CD14-positive monocyte (primary cell): ENCODE measurements at regions of chr1 and their contacts with region 1.

Region 1: GRCh38 chr1:41751804-41752513 is 166.8 kb downstream of the HIVEP3 start:
- DNase-seq: peak; percentile 94 to 97 (median 95)
- H3K4me3 ChIP-seq: peak overlapping the region in 1 of 3 experiments; percentile 21
- H3K4me3 Mint-ChIP-seq: peak overlapping the region; percentile 40 to 76
- H3K27ac ChIP-seq: peak overlapping the region; percentile 91 to 96
- H3K27ac Mint-ChIP-seq: peak overlapping the region; percentile 96 to 99 (median 98)
- H3K4me1 ChIP-seq: peaks cover 51 to 68% of the 10 kb centered on the region in 2 donors
- H3K4me1 Mint-ChIP-seq: peaks cover 60% of the 10 kb centered on the region
- H3K27me3 ChIP-seq: no peaks in the 10 kb centered on the region
- H3K27me3 Mint-ChIP-seq: peaks cover 0 to 7% (median under 1%) of the 10 kb centered on the region in 3 donors
- CTCF ChIP-seq: no peak

Region 2: GRCh38 chr1:41599912-41600311 is 152.0 kb before region 1 on chr1:
- intact Hi-C with region 1: no loop called
- DNase-seq: no peak
- H3K4me3 ChIP-seq: no peak overlapping the region
- H3K4me3 Mint-ChIP-seq: no peak overlapping the region
- H3K27ac ChIP-seq: no peak overlapping the region
- H3K27ac Mint-ChIP-seq: no peak overlapping the region
- H3K4me1 ChIP-seq: no peaks in the 10 kb centered on the region
- H3K4me1 Mint-ChIP-seq: peaks cover 2% of the 10 kb centered on the region
- H3K27me3 ChIP-seq: no peaks in the 10 kb centered on the region
- H3K27me3 Mint-ChIP-seq: peaks cover 0 to 3% (median 0%) of the 10 kb centered on the region in 3 donors
- CTCF ChIP-seq: no peak

Region 3: DNA sequence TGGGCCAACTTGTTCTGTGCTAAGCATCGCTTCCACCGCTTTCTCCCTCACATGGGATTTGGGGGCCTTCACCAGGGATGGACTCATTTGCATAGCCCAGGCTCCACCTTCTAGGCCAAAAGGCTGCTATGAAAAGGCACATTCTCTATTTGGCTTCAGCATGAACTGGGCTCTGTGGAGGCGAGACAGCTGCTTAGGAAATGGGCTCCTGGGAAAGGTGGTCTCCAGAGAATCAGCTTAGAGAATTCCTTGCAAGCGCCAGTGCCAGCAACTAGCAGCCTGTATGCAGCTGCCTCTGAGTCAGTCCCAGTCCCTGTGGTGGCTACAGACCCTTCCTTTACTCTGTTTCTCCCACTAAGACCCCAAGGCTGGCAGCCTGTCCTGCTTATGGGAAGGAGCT is 47.8 kb before region 1 on chr1:
- intact Hi-C with region 1: no loop called
- DNase-seq: no peak
- H3K4me3 ChIP-seq: no peak overlapping the region
- H3K4me3 Mint-ChIP-seq: no peak overlapping the region
- H3K27ac ChIP-seq: no peak overlapping the region
- H3K27ac Mint-ChIP-seq: no peak overlapping the region
- H3K4me1 ChIP-seq: peaks cover 26 to 31% of the 10 kb centered on the region in 2 donors
- H3K4me1 Mint-ChIP-seq: peaks cover 30% of the 10 kb centered on the region
- H3K27me3 ChIP-seq: no peaks in the 10 kb centered on the region
- H3K27me3 Mint-ChIP-seq: peaks cover 2 to 4% (median 4%) of the 10 kb centered on the region in 3 donors
- CTCF ChIP-seq: no peak

Region 4: DNA sequence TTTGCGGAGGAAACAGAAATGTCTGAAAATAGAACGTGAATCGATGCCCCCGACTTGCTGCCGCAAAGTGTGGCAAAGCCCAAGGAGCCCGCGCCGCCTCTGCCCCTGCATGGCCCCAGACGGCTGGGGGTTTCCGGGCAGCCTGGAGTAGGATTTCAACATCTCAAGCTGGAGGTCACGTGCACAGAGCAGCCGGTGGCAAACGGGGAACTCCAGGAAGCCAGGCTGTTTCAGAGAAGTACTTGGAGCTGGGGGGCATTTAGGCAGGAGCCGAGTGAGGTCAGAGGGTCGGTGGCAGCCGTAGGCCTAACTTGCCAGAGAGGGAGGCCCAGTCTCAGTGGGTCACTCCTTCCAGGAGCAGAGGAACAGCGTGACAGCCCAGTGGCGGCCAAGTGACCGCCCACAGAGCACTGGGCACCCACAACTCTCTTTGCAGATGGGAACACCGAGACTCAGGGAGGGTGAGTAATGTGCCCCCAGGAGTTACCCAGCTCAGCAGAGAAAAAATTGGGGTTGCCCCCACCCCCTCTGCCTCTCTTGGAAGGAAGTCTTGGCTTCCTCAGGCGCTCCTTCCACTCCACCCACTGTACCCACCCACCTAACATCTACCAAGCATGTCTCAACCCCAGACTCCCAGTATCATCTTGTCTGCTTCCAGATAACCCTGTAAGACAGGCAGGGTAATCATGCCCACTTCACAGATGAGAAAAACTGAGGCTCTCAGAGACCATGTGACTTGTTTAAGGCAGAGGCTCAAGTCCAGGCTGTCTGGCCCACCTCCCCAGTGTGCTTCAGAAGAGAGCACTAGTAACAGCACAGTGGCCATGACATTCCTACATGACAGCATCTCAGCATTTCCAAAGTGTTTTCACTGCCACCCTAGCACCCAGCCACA is 12.7 kb before region 1 on chr1:
- intact Hi-C with region 1: loop called in 1 of 2 experiments (anchors 1 kb)
- DNase-seq: peak; percentile 97 to 99 (median 97)
- H3K4me3 ChIP-seq: peak overlapping the region; percentile 5 to 57 (median 32)
- H3K4me3 Mint-ChIP-seq: peak overlapping the region; percentile 72 to 83
- H3K27ac ChIP-seq: peak overlapping the region; percentile 98 to 99
- H3K27ac Mint-ChIP-seq: peak overlapping the region; percentile 99 to 100 (median 99)
- H3K4me1 ChIP-seq: peaks cover 84 to 92% of the 10 kb centered on the region in 2 donors
- H3K4me1 Mint-ChIP-seq: peaks cover 96% of the 10 kb centered on the region
- H3K27me3 ChIP-seq: no peaks in the 10 kb centered on the region
- H3K27me3 Mint-ChIP-seq: peaks cover 0 to 2% (median 0%) of the 10 kb centered on the region in 3 donors
- CTCF ChIP-seq: no peak

Region 5: GRCh38 chr1:41765152-41765551 is 13.2 kb after region 1 on chr1:
- intact Hi-C with region 1: loop called in 1 of 2 experiments (anchors 2 kb)
- DNase-seq: peak; percentile 69 to 81 (median 77)
- H3K4me3 ChIP-seq: peak overlapping the region; percentile 19 to 66 (median 26)
- H3K4me3 Mint-ChIP-seq: peak overlapping the region; percentile 65 to 73
- H3K27ac ChIP-seq: peak overlapping the region; percentile 84 to 94
- H3K27ac Mint-ChIP-seq: peak overlapping the region; percentile 94 to 98 (median 96)
- H3K4me1 ChIP-seq: peaks cover 71 to 82% of the 10 kb centered on the region in 2 donors
- H3K4me1 Mint-ChIP-seq: peaks cover 86% of the 10 kb centered on the region
- H3K27me3 ChIP-seq: no peaks in the 10 kb centered on the region
- H3K27me3 Mint-ChIP-seq: peaks cover 0 to 2% (median 0%) of the 10 kb centered on the region in 3 donors
- CTCF ChIP-seq: no peak